Pancreas (tissue), 10 donors: ENCODE measurements at regions of chr12 and their contacts with region 1.

Region 1: DNA sequence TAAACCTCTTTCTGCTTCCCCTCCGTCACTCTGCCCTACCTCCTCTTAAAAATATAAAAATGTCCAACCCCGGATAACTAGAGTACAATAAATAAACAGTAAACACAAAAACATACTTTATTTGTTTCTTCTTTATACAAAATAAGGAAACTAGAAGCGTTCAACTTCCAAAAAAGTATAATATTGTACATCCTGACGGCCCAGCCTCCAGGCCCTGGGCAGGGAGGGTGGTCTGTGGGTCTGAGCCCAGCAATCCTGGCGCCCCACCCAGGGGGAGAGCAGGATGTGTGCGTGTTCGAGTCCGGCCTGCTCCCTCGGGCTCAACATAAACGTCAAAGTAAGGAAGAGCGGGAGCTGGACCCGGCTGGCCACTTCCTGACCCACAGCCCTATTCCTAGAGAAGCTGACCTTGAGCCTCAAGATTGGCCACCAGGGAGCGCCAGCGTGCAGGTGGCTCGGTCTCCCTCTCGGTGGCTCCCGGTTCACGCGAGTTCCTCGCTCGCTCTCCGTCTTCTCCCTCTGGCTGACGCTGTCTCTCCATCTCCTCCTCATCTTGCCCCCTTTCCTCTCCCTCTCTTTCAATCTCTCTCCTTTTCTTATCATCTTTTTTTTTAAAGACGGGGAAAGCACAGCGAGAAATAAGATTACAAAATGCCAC is 9.4 kb downstream of the LHX5 start:
- DNase-seq: peak; percentile 59 to 93 (median 80)
- ATAC-seq: peak; percentile 91 to 96 (median 92)
- H3K4me3 ChIP-seq: peak overlapping the region in 1 of 4 donors; percentile 23
- H3K27ac ChIP-seq: no peak overlapping the region
- H3K4me1 ChIP-seq: peaks cover 3 to 14% (median 6%) of the 10 kb centered on the region in 3 donors
- H3K27me3 ChIP-seq: peaks cover 8 to 43% (median 15%) of the 10 kb centered on the region in 4 donors
- CTCF ChIP-seq: peak; percentile 69 to 79 (median 74)

Region 2: GRCh38 chr12:113506830-113507229 is 44.6 kb after region 1 on chr12:
- intact Hi-C with region 1: no loop called
- DNase-seq: no peak
- ATAC-seq: no peak
- H3K4me3 ChIP-seq: no peak overlapping the region
- H3K27ac ChIP-seq: no peak overlapping the region
- H3K4me1 ChIP-seq: no peaks in the 10 kb centered on the region
- H3K27me3 ChIP-seq: peaks cover 0 to 7% (median 0%) of the 10 kb centered on the region in 4 donors
- CTCF ChIP-seq: no peak

Region 3: DNA sequence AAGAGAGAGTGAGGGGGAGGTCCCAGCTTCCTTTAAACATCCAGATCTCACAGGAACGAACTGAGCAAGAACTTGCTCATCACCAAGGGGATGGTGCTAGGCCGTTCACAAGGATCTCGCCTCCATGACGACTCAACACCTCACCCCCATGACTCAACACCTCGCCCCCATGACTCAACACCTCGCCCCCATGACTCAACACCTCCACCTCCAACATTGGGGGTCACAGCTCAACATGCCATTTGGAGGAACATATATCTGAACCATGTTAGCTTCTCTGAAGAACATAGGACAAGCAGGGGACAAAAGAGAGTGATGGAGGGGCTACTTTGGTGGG is 75.5 kb after region 1 on chr12:
- intact Hi-C with region 1: no loop called
- DNase-seq: no peak
- ATAC-seq: no peak
- H3K4me3 ChIP-seq: no peak overlapping the region
- H3K27ac ChIP-seq: no peak overlapping the region
- H3K4me1 ChIP-seq: no peaks in the 10 kb centered on the region
- H3K27me3 ChIP-seq: peaks cover 0 to 12% (median 0%) of the 10 kb centered on the region in 4 donors
- CTCF ChIP-seq: no peak

Region 4: GRCh38 chr12:113912760-113913329 is 450.6 kb after region 1 on chr12:
- intact Hi-C with region 1: loop called in 1 of 3 experiments (anchors 5 kb)
- DNase-seq: peak in 5 of 6 donors; percentile 42 to 83 (median 59)
- ATAC-seq: peak; percentile 50 to 92 (median 88)
- H3K4me3 ChIP-seq: no peak overlapping the region
- H3K27ac ChIP-seq: no peak overlapping the region
- H3K4me1 ChIP-seq: no peaks in the 10 kb centered on the region
- H3K27me3 ChIP-seq: no peaks in the 10 kb centered on the region
- CTCF ChIP-seq: peak; percentile 68 to 85 (median 76)